SK-N-SH (cell line): ENCODE measurements at regions of chr7 and their contacts with region 1.

Region 1: DNA sequence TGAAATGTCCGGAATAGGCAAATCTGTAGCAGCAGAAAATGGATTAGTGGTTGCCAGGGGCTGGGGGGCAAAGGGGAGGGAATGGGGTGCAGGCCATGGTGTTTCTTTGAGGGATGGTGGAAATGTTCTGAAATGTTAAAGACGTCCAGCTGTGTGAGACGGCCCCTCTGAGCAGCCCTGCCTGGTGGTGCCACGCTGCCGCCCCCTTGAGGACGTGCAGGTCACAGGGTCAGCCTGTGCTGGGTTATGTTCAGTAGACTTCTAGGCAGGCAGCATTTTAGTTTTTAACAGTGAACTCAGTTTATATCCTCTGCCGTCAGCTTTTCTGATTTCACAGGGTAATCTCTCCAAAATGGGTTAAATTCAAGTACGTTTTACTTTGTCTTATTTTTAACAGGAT is 9.4 kb downstream of the NUB1 start:
- DNase-seq: peak; percentile 48
- H3K4me3 ChIP-seq: no peak overlapping the region
- H3K27ac ChIP-seq: no peak overlapping the region; a peak in 1 of 4 replicates
- H3K4me1 ChIP-seq: peaks cover 5 to 8% of the 10 kb centered on the region in 2 experiments; a peak in 2 of 4 replicates
- H3K27me3 ChIP-seq: no peaks in the 10 kb centered on the region
- CTCF ChIP-seq: peak; percentile 51
- EP300 ChIP-seq: no peak
- RAD21 ChIP-seq: peak; percentile 23; the same call in 1 of the 2 replicates

Region 2: GRCh38 chr7:151152643-151153513 is 198.1 kb before region 1 on chr7:
- CTCF ChIA-PET with region 1: no interaction called
- POLR2A ChIA-PET with region 1: no interaction called
- DNase-seq: no peak
- H3K4me3 ChIP-seq: no peak overlapping the region
- H3K27ac ChIP-seq: no peak overlapping the region
- H3K4me1 ChIP-seq: no peaks in the 10 kb centered on the region
- H3K27me3 ChIP-seq: peaks cover 37% of the 10 kb centered on the region; the same call in 1 of the 2 replicates
- CTCF ChIP-seq: peak; percentile 31; the same call in 1 of the 2 replicates
- EP300 ChIP-seq: no peak
- RAD21 ChIP-seq: no peak

Region 3: GRCh38 chr7:151336027-151336708 is 14.9 kb before region 1 on chr7:
- CTCF ChIA-PET with region 1: interaction called, 22 read pairs
- POLR2A ChIA-PET with region 1: interaction called, 3 read pairs
- DNase-seq: no peak
- H3K4me3 ChIP-seq: no peak overlapping the region
- H3K27ac ChIP-seq: no peak overlapping the region
- H3K4me1 ChIP-seq: peaks cover 0 to 2% of the 10 kb centered on the region in 2 experiments; a peak in 1 of 4 replicates
- H3K27me3 ChIP-seq: no peaks in the 10 kb centered on the region
- CTCF ChIP-seq: no peak
- EP300 ChIP-seq: no peak
- RAD21 ChIP-seq: no peak